ENCODE measurements at regions of chr1 and their contacts with region 1.

Region 1: GRCh38 chr1:101145449-101145820 is 91.4 kb upstream of the S1PR1 start:
- DNase-seq: no peak
- ATAC-seq: peak; percentile 39
- H3K4me3 Mint-ChIP-seq: peak overlapping the region; percentile 21
- H3K27ac Mint-ChIP-seq: peak overlapping the region; percentile 74
- H3K4me1 Mint-ChIP-seq: peaks cover 15% of the 10 kb centered on the region
- H3K27me3 Mint-ChIP-seq: no peaks in the 10 kb centered on the region
- CTCF ChIP-seq: no peak

Region 2: GRCh38 chr1:100972185-100972584 is 173.2 kb before region 1 on chr1:
- CTCF ChIA-PET with region 1: no interaction called
- POLR2A ChIA-PET with region 1: no interaction called
- intact Hi-C with region 1: no loop called
- DNase-seq: no peak
- ATAC-seq: no peak
- H3K4me3 Mint-ChIP-seq: no peak overlapping the region
- H3K27ac Mint-ChIP-seq: peak overlapping the region; percentile 31
- H3K4me1 Mint-ChIP-seq: peaks cover 25% of the 10 kb centered on the region
- H3K27me3 Mint-ChIP-seq: no peaks in the 10 kb centered on the region
- CTCF ChIP-seq: no peak

Region 3: DNA sequence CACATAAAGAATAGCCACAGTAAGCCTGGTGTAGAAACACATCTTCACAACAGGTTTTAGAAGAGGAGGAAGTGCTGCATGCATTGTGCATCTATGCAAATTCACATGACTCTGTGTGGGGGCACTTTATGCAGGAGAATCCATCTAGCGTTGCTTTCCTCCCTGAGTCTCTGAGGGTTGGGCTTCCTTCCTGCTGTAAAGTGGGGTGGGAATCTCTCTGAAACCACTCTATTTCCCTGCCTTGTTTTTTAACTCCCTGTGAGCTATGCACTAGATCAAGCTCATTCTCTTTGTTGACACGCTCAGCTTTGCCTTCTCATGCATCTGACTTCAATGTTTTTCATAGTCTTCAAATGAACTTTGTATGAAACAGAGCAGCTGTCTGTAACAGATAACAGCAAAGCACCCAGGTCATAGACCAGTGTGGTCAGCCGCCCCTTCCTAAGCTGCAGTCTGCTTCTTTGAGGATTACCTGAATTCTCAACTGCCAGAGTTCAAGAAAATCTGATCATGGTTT is 17.2 kb before region 1 on chr1:
- CTCF ChIA-PET with region 1: no interaction called
- POLR2A ChIA-PET with region 1: interaction called, 6 read pairs
- intact Hi-C with region 1: loop called (anchors 2 kb)
- DNase-seq: no peak
- ATAC-seq: peak; percentile 95
- H3K4me3 Mint-ChIP-seq: peak overlapping the region; percentile 55
- H3K27ac Mint-ChIP-seq: peak overlapping the region; percentile 87
- H3K4me1 Mint-ChIP-seq: peaks cover 62% of the 10 kb centered on the region
- H3K27me3 Mint-ChIP-seq: no peaks in the 10 kb centered on the region
- CTCF ChIP-seq: no peak

Measured in activated B cell treated with CpG ODN at 0.5 μM for 24 hours (primary cell).